HepG2 (cell line): ENCODE measurements at regions of chr1 and their contacts with region 1.

Region 1: DNA sequence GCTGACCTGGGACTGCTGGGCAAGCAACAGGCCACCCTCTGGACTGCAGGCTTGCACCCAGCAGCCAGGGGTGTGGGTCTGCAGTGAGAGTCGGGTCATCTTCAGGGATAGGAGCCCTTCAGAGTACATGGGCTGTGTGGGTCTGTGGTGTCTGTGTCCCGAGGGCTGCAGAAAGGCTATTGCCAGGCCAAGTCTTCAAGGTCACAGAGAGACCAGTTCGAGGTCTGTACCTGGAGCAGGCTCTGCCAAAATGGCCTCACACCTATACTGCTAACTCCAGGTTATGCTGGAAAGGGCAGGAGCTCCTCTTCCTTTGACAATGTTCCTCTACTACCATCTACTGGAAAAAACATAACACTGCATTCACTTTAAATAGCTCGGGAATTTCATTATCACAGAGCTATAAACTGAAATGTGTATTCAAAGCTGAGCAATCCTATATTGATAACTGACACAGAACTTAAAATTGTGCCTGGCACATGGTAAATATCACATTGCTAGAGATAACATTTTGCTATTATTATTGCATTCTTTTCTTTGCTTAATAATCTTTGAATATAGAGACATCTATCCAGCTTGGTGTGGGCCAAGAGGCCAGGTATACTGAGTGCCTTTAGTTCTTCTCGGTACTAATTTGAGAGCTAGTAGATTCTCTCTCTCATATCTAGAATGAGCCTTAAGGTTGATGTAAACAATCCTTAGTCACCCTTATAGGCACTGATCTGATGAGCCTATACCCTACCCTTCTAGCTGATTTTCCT is 6.9 kb upstream of the DNAH14 start:
- DNase-seq: peak; percentile 30
- ATAC-seq: peak; percentile 93
- H3K4me3 ChIP-seq: no peak overlapping the region
- H3K27ac ChIP-seq: no peak overlapping the region
- H3K4me1 ChIP-seq: 0 out of 2 replicates have a peak, but pooled peaks cover 8% of the 10 kb centered on the region
- H3K27me3 ChIP-seq: no peaks in the 10 kb centered on the region
- CTCF ChIP-seq: peak; percentile 80
- EP300 ChIP-seq: no peak
- POLR2A ChIP-seq: no peak
- RAD21 ChIP-seq: peak; percentile 64

Region 2: DNA sequence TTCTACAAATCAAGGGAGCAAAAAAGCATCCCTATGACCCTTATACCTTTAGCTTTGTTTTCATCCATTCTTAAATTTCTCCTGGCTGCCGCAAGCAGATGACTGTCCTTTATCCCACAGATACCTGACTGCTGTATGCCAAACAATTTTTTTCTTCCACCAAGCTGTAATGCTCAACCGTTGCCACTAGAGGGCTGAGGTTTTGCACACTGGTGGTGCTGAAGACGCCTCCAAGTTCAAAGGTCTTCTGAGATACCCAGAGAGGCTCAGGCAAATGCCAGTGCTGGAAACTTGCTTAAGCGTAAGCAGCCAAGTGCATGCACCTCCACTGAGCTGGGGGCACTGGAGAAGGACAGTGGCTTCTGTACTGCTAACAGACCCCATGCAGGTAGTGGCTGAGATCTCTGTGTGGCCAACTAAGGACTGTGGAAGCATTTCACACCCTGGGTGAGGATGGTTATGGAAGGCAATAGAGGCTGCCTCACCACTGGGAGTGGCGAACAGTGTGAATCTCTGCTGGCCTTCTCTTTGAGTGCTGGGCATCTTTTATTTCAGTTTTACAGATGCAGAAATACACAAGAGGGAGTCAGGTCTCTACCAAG is 277.9 kb before region 1 on chr1:
- CTCF ChIA-PET with region 1: interaction called, 9 read pairs
- POLR2A ChIA-PET with region 1: interaction called, 3 read pairs
- in situ Hi-C with region 1: loop called (anchors 10 kb)
- intact Hi-C with region 1: no loop called
- DNase-seq: peak; percentile 35
- ATAC-seq: peak; percentile 74
- H3K4me3 ChIP-seq: no peak overlapping the region
- H3K27ac ChIP-seq: no peak overlapping the region
- H3K4me1 ChIP-seq: no peaks in the 10 kb centered on the region
- H3K27me3 ChIP-seq: peaks cover 3 to 7% of the 10 kb centered on the region in 2 experiments; a peak in 3 of 5 replicates
- CTCF ChIP-seq: peak; percentile 80
- EP300 ChIP-seq: no peak
- POLR2A ChIP-seq: no peak
- RAD21 ChIP-seq: 0 out of 2 replicates have a peak, but pooled peaks have one; percentile 31

Region 3: DNA sequence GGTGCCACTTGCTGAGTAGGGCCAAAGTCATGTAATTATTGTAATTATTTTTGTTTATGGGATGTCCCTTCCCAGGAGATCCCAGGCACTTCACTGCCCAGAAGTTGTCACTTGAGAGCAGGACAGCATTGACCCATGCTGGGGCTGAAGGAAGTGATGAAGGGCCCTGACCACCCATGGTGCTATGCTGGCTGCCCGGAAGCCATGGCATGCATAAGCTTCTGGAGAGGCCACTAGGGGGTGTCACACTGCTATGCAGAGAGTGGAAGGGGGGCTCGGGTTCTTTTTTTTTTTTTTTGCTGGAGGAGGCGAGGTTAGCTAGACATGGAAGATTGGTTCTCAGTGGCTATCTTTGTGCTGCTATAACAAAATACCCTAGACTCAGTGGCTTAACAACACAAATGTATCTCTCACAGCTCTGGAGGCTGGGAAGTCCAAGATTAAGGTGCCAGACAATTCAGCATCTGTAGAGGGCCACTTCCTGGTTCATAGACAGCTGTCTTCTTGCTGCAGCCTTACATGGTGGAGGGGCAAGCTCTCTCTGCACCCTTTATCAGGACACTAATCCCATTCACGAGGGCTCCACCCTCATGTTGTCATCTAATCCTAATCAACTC is 221.6 kb before region 1 on chr1:
- CTCF ChIA-PET with region 1: no interaction called
- POLR2A ChIA-PET with region 1: no interaction called
- in situ Hi-C with region 1: no loop called
- intact Hi-C with region 1: loop called (anchors 1 kb)
- DNase-seq: peak; percentile 19
- ATAC-seq: peak; percentile 84
- H3K4me3 ChIP-seq: no peak overlapping the region
- H3K27ac ChIP-seq: no peak overlapping the region
- H3K4me1 ChIP-seq: no peaks in the 10 kb centered on the region
- H3K27me3 ChIP-seq: no peaks in the 10 kb centered on the region; a peak in 1 of 5 replicates
- CTCF ChIP-seq: peak; percentile 56
- EP300 ChIP-seq: no peak
- POLR2A ChIP-seq: no peak
- RAD21 ChIP-seq: no peak